HAP-1 (cell line): ENCODE measurements at regions of chr5 and their contacts with region 1.

Region 1: GRCh38 chr5:179720222-179720621 is 12.4 kb upstream of the MAML1 start:
- DNase-seq: no peak
- H3K4me3 ChIP-seq: no peak overlapping the region
- H3K4me1 ChIP-seq: no peaks in the 10 kb centered on the region
- H3K27me3 ChIP-seq: no peaks in the 10 kb centered on the region

Region 2: GRCh38 chr5:178120868-178121357 is 1599.3 kb before region 1 on chr5:
- in situ Hi-C with region 1: no loop called
- DNase-seq: peak; percentile 73 to 92
- H3K4me3 ChIP-seq: no peak overlapping the region
- H3K4me1 ChIP-seq: peaks cover under 1% of the 10 kb centered on the region
- H3K27me3 ChIP-seq: no peaks in the 10 kb centered on the region

Region 3: GRCh38 chr5:179438011-179438441 is 282.2 kb before region 1 on chr5:
- in situ Hi-C with region 1: no loop called
- DNase-seq: no peak
- H3K4me3 ChIP-seq: no peak overlapping the region
- H3K4me1 ChIP-seq: no peaks in the 10 kb centered on the region
- H3K27me3 ChIP-seq: no peaks in the 10 kb centered on the region

Region 4: DNA sequence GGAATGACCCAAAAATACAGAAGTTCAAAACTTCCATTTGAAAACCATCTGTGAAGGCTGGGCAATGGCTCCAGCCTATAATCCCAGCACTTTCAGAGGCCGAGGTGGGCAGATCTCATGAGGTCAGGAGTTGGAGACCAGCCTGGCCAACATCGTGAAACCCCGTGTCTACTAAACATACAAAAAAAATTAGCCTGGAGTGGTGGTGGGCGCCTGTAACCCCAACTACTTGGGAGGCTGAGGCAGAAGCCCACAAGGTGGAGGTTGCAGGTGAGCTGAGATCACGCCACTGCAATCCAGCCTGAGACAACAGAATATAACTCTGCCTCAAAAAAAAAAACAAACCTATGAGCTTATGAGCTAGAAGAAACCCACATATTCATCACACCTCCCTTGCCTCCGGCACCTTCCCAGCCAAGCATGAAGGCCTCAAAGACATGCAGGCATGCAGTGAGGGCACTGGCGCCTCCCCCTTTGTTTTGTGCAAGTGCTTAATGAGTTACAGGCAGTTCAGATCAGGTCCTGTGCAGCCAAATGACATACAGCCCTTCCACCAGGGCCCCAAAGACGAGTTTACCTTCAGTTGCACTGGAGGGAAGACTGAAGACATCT is 106.7 kb before region 1 on chr5:
- in situ Hi-C with region 1: loop called (anchors 10 kb)
- DNase-seq: no peak
- H3K4me3 ChIP-seq: no peak overlapping the region
- H3K4me1 ChIP-seq: no peaks in the 10 kb centered on the region; the same call in 1 of the 2 replicates
- H3K27me3 ChIP-seq: no peaks in the 10 kb centered on the region